ENCODE measurements at regions of chr16 and their contacts with region 1.

Region 1: DNA sequence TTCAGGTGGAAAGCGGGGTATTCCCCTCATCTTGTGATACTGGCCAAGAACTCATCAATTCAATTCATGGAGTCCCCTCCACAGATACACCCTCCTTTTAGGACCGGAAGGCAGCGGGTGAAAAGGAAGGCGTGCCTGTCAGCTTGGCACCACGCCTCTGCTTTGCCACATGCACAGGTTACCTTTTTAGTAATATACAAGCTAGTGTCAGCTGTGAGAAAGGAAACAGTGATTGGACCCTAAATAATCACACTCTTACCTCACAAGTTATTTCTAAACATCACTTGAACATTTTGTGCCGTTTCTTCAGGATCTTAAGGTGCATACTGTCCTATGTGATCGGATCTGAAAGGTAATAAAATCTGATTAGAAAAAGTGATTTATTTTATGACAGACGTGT is 15.7 kb downstream of the ZDHHC7 start:
- DNase-seq: no peak
- H3K4me3 ChIP-seq: peak overlapping the region; percentile 5; the same call in 1 of the 2 replicates
- H3K27ac ChIP-seq: peak overlapping the region; percentile 94
- H3K4me1 ChIP-seq: peaks cover 73% of the 10 kb centered on the region
- H3K27me3 ChIP-seq: no peaks in the 10 kb centered on the region
- CTCF ChIP-seq: no peak

Region 2: DNA sequence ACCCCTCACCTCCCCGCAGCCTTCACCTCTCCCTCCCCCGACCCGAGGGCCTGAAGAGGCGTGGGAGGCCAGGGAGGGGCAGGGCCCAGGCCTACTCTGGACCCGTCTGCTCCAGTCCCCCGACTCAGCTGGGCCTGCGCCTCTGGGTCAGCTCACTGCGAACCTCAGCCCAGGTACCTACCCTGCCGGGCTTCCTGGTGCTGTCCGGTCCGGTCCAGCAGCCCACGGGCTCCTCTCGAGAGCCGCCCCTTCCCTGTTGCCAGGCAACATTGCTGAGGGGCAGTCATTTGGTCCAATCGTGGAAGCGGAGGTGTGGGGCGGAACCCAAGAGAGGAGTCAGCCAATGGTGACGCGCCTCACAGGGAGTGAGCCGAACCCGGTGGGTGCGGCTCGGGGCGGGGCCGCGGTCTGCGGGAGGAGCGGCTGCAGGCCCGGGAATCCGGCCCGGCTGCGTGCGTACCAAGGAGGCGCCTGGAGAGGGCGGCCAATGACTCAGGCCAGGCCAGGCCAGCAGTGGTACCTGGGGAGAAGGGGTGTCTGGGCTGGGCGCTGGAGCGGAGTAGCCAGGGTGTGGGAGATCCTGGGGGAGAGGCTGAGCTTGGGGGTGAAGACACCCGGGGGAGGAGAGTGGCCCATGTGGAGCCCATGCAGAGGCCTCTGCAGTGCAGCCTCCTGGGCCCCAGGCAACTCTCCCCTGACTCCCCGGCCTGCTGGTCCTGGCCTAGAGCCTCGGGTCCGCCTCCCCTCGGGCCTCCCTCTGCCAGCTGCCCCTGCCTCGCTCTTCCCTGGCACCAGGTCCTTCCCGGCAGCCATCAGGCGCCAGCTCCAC is 491.0 kb before region 1 on chr16 and contains the start of gene MEAK7:
- CTCF ChIA-PET with region 1: no interaction called
- POLR2A ChIA-PET with region 1: no interaction called
- intact Hi-C with region 1: loop called (anchors 5 kb)
- DNase-seq: peak; percentile 95 to 99
- H3K4me3 ChIP-seq: peak within 1 kb of the TSS; percentile 92
- H3K27ac ChIP-seq: peak within 1 kb of the TSS; percentile 99
- H3K4me1 ChIP-seq: peaks cover 59% of the 10 kb centered on the region
- H3K27me3 ChIP-seq: no peaks in the 10 kb centered on the region
- CTCF ChIP-seq: no peak
- total RNA-seq, gene MEAK7: 73.4 and 74.6 TPM in 2 replicates

Region 3: DNA sequence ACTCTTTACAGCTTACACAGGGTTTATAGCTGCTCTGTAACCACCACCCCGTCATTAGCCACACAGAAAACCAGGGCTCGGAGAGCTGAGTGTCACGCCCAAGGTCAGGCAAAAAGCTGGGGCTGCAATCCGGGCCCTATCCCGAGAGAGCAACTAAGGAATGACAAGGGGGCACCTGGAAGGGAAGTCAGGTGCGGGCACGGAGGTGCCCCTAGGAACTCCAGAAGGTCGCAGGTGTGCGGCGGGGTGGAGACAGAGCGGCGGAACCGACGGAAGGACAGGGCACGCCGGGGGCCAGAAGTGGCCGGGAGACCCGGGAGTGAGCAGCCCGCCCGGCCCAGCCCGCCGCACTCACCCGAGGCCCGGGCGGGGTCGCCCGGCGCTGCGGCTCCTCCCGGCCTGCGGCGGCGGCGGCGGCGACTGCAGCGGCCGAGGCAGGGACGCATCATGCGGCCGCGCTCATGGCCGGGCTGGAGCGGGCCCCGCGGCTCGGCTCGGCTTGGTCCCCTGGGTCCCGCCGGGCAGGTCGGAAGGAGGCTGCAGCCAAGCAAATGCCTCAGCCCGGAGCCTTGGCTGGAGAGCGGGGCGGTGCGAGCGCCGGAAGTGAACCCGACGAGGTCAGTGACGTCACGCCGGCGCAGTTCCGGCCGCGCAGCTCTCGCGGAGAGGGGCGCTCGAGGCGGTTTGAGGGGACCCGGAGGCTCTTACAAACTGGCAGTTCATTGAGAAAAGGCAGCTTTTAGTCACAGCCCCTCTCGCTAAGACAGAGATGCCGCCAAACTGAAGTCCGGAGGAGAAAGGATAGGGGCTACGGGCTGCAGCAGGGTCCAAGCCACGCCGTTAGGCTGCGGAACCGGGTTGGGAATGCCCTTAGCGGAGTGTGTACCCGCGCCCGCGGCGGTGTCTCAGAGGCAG is 15.5 kb after region 1 on chr16 and contains the start of gene ZDHHC7:
- CTCF ChIA-PET with region 1: interaction called, 3 read pairs
- POLR2A ChIA-PET with region 1: interaction called, 5 read pairs
- intact Hi-C with region 1: loop called (anchors 2 kb)
- DNase-seq: peak; percentile 66 to 78
- H3K4me3 ChIP-seq: peak within 1 kb of the TSS; percentile 97
- H3K27ac ChIP-seq: peak within 1 kb of the TSS; percentile 81
- H3K4me1 ChIP-seq: peaks cover 28% of the 10 kb centered on the region
- H3K27me3 ChIP-seq: no peaks in the 10 kb centered on the region
- CTCF ChIP-seq: no peak
- total RNA-seq, gene ZDHHC7: 79.3 and 85.1 TPM in 2 replicates

Region 4: GRCh38 chr16:85027349-85027957 is 31.8 kb after region 1 on chr16 and contains the start of gene KIAA0513:
- CTCF ChIA-PET with region 1: interaction called, 4 read pairs
- POLR2A ChIA-PET with region 1: no interaction called
- intact Hi-C with region 1: loop called (anchors 5 kb)
- DNase-seq: peak; percentile 73 to 95
- H3K4me3 ChIP-seq: peak within 1 kb of the TSS; percentile 93
- H3K27ac ChIP-seq: peak within 1 kb of the TSS; percentile 52
- H3K4me1 ChIP-seq: peaks cover 52% of the 10 kb centered on the region
- H3K27me3 ChIP-seq: no peaks in the 10 kb centered on the region
- CTCF ChIP-seq: no peak; the same call in 1 of the 2 replicates
- total RNA-seq, gene KIAA0513: 4.2 and 4.3 TPM in 2 replicates

Region 5: GRCh38 chr16:85037050-85037410 is 41.4 kb after region 1 on chr16:
- CTCF ChIA-PET with region 1: no interaction called
- POLR2A ChIA-PET with region 1: no interaction called
- intact Hi-C with region 1: loop called (anchors 2 kb)
- DNase-seq: peak; percentile 77 to 92
- H3K4me3 ChIP-seq: peak overlapping the region; percentile 35; the same call in 1 of the 2 replicates
- H3K27ac ChIP-seq: peak overlapping the region; percentile 77
- H3K4me1 ChIP-seq: peaks cover 20% of the 10 kb centered on the region
- H3K27me3 ChIP-seq: no peaks in the 10 kb centered on the region
- CTCF ChIP-seq: no peak

Region 6: GRCh38 chr16:85101956-85102630 is 106.4 kb after region 1 on chr16:
- CTCF ChIA-PET with region 1: no interaction called
- POLR2A ChIA-PET with region 1: no interaction called
- intact Hi-C with region 1: no loop called
- DNase-seq: no peak
- H3K4me3 ChIP-seq: no peak overlapping the region
- H3K27ac ChIP-seq: no peak overlapping the region
- H3K4me1 ChIP-seq: no peaks in the 10 kb centered on the region
- H3K27me3 ChIP-seq: peaks cover 20% of the 10 kb centered on the region
- CTCF ChIP-seq: no peak

Measured in PC-9 (cell line).